ENCODE measurements at regions of chr11 and their contacts with region 1.

Region 1: GRCh38 chr11:61580271-61580888 is 496 bp downstream of the SYT7 start:
- DNase-seq: peak in 1 of 2 experiments; percentile 39
- ATAC-seq: peak; percentile 14 to 25; a peak in 4 of 6 replicates
- H3K4me3 ChIP-seq: peak overlapping the region; percentile 57
- H3K27ac ChIP-seq: peak overlapping the region; percentile 61 to 91
- H3K4me1 ChIP-seq: peaks cover 13% of the 10 kb centered on the region; the same call in 2 of the 3 replicates
- CTCF ChIP-seq: no peak; the same call in 1 of the 3 replicates
- EP300 ChIP-seq: no peak
- POLR2A ChIP-seq: no peak
- RAD21 ChIP-seq: no peak

Region 2: GRCh38 chr11:61541598-61541997 is 38.8 kb before region 1 on chr11:
- CTCF ChIA-PET with region 1: interaction called, 24 read pairs
- POLR2A ChIA-PET with region 1: no interaction called
- DNase-seq: peak; percentile 26 to 36
- ATAC-seq: peak; percentile 16 to 52; a peak in 3 of 6 replicates
- H3K4me3 ChIP-seq: no peak overlapping the region
- H3K27ac ChIP-seq: peak overlapping the region in 1 of 2 experiments; percentile 75; a peak in 3 of 6 replicates
- H3K4me1 ChIP-seq: peaks cover 35% of the 10 kb centered on the region
- CTCF ChIP-seq: no peak
- EP300 ChIP-seq: no peak
- POLR2A ChIP-seq: no peak
- RAD21 ChIP-seq: no peak

Measured in A549 (cell line).